Activated B cell treated with CpG ODN at 0.5 μM for 24 hours (primary cell): ENCODE measurements at regions of chr3 and their contacts with region 1.

Region 1: GRCh38 chr3:106232956-106233355 is 364.1 kb upstream of the CBLB start:
- DNase-seq: no peak
- ATAC-seq: no peak
- H3K4me3 Mint-ChIP-seq: no peak overlapping the region
- H3K27ac Mint-ChIP-seq: no peak overlapping the region
- H3K4me1 Mint-ChIP-seq: peaks cover 7% of the 10 kb centered on the region
- H3K27me3 Mint-ChIP-seq: no peaks in the 10 kb centered on the region
- CTCF ChIP-seq: no peak

Region 2: DNA sequence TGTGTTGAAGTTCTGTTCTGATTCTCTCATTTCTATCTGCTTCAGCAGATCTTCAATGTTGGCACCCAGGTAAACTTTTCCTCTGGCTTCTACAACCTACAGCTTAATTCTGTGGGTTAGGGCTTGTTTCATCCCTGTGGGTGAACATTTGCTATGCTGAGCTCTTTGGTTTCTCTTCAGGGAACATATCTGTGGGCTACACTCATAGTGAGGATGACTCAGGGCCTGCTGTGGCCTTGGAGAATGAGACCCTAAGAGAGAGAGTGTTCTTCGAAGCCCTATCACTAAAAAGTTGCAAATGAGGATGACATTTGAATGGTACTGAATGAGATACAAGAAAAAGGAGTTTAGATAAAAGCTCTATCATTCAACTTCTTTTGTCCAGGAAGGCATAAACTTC is 17.9 kb before region 1 on chr3:
- CTCF ChIA-PET with region 1: no interaction called
- POLR2A ChIA-PET with region 1: no interaction called
- intact Hi-C with region 1: loop called (anchors 2 kb)
- DNase-seq: no peak
- ATAC-seq: no peak
- H3K4me3 Mint-ChIP-seq: no peak overlapping the region
- H3K27ac Mint-ChIP-seq: no peak overlapping the region
- H3K4me1 Mint-ChIP-seq: peaks cover 12% of the 10 kb centered on the region
- H3K27me3 Mint-ChIP-seq: no peaks in the 10 kb centered on the region
- CTCF ChIP-seq: no peak

Region 3: DNA sequence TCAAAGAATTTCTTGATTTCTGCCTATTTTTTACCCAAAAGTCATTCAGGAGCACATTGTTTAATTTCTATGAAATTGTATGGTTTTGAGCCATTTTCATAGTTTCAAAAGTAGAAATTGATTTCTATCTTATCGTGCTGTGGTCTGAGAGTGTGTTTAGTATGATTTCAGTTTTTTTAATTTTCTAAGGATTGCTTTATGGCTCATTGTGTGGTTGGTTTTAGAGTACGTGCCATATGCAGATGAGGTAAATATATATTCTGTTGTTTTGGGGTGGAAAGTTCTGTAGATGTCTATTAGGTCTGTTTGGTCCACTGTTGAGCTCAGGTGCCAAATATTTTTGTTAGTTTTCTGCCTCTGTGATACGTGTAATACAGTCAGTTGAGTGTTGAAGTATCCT is 122.9 kb after region 1 on chr3:
- CTCF ChIA-PET with region 1: no interaction called
- POLR2A ChIA-PET with region 1: no interaction called
- intact Hi-C with region 1: no loop called
- DNase-seq: no peak
- ATAC-seq: no peak
- H3K4me3 Mint-ChIP-seq: no peak overlapping the region
- H3K27ac Mint-ChIP-seq: no peak overlapping the region
- H3K4me1 Mint-ChIP-seq: peaks cover 4% of the 10 kb centered on the region
- H3K27me3 Mint-ChIP-seq: no peaks in the 10 kb centered on the region
- CTCF ChIP-seq: no peak

Region 4: GRCh38 chr3:106376016-106376570 is 143.1 kb after region 1 on chr3:
- CTCF ChIA-PET with region 1: no interaction called
- POLR2A ChIA-PET with region 1: no interaction called
- intact Hi-C with region 1: no loop called
- DNase-seq: no peak
- ATAC-seq: no peak
- H3K4me3 Mint-ChIP-seq: no peak overlapping the region
- H3K27ac Mint-ChIP-seq: no peak overlapping the region
- H3K4me1 Mint-ChIP-seq: no peaks in the 10 kb centered on the region
- H3K27me3 Mint-ChIP-seq: no peaks in the 10 kb centered on the region
- CTCF ChIP-seq: no peak

Region 5: DNA sequence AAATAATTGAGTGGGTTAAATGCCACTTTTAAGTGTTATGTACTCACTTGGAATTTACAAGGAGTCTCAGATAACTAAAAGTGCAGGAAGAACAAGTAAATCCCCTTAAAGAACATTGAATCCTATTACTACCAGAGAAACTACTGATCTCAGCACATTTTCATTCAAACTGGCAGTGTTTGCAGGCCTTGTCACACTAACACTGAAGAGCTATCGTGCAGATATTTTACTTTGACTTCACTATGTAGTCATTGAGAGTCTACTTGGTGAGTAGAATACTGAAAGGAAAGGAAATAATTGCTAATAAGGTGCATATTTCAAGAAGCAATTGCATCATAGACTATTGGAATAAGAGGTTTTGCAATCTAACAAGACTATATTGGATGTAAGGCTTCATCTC is 357.3 kb after region 1 on chr3:
- CTCF ChIA-PET with region 1: no interaction called
- POLR2A ChIA-PET with region 1: no interaction called
- intact Hi-C with region 1: no loop called
- DNase-seq: no peak
- ATAC-seq: no peak
- H3K4me3 Mint-ChIP-seq: no peak overlapping the region
- H3K27ac Mint-ChIP-seq: no peak overlapping the region
- H3K4me1 Mint-ChIP-seq: peaks cover 6% of the 10 kb centered on the region
- H3K27me3 Mint-ChIP-seq: peaks cover 2% of the 10 kb centered on the region
- CTCF ChIP-seq: no peak